ENCODE measurements at regions of chr14 and their contacts with region 1.

Region 1: DNA sequence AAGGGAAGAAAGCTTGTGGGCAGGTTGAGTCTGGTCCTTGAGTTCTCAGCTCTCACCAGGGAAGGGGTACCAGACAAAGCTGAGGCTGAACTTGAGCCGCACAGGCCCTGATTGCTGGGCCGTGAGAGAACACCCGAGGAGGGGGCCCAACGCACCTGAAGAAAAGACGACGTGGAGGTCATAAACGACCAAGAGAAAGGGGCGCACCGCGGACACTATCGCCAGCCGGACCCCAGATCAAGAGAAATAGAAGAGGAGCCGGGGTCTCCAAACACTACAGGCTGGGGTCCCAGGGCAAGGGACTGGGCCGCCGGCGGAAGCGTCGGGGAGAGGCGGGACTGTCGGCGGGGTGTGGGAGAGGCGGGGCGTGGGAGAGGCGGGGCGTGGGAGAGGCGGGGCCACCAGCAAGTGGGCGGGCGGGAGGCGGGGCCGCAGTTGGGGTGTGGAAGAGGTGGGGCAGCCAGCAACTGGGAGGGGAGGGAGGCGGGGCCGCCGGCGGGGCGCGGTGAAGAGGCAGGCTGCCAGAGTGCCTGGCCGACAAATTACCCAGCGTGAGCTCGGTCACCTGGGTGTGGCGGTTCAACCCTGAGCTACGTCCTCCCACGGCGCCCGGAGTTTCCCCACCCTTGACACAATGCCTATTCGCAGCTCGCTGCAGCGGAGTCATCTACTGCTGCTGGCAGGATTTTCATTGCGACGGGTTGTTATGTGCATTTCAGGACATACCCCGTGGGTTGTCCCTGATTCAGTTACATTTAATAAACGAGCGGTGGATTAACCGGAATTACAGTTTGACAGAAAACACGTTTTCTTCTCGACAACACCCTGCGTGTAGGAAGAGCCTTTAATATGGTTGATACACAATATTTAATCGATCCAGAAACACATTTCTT is 15.5 kb upstream of the NEMF start:
- DNase-seq: peak; percentile 95 to 98 (median 98)
- H3K4me3 ChIP-seq: peak overlapping the region; percentile 63 to 83 (median 73)
- H3K27ac ChIP-seq: peak overlapping the region; percentile 80 to 91
- H3K4me1 ChIP-seq: peaks cover 12 to 34% (median 26%) of the 10 kb centered on the region in 4 experiments
- H3K27me3 ChIP-seq: no peaks in the 10 kb centered on the region

Region 2: GRCh38 chr14:49852301-49853157 is 15.5 kb before region 1 on chr14 and contains the start of gene NEMF:
- CTCF ChIA-PET with region 1: interaction called, 96 read pairs
- POLR2A ChIA-PET with region 1: interaction called, 3 read pairs
- DNase-seq: peak; percentile 94 to 96 (median 95)
- H3K4me3 ChIP-seq: peak within 1 kb of the TSS; percentile 85 to 100 (median 98)
- H3K27ac ChIP-seq: peak within 1 kb of the TSS; percentile 91 to 97
- H3K4me1 ChIP-seq: peaks cover 9 to 19% (median 10%) of the 10 kb centered on the region in 4 experiments
- H3K27me3 ChIP-seq: no peaks in the 10 kb centered on the region

Region 3: DNA sequence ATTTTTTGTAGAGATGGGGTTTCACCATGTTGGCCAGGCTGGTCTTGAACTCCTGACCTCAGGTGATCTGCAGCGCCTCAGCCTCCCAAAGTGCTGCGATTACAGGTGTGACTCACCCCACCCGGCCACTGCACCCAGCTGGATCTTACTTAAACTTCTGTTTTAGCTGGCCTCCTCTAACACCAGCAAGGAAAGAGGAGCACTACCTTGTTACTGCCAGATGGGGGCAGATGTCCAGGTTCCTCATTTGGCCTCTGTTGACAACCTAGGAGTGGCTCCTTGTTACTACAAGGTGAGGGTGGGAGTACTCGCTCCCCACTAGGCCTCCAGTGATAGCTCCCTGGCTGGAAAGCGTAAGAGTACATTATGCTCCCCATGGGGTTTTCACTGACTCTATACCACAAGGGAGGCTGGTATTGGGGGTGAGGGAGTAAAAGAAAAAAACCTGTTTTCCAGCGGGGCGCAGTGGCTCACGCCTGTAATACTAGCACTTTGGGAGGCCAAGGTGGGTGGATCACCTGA is 11.7 kb after region 1 on chr14:
- CTCF ChIA-PET with region 1: interaction called, 12 read pairs
- POLR2A ChIA-PET with region 1: no interaction called
- DNase-seq: peak; percentile 84 to 92 (median 92)
- H3K4me3 ChIP-seq: no peak overlapping the region
- H3K27ac ChIP-seq: no peak overlapping the region
- H3K4me1 ChIP-seq: peaks cover 0 to 16% (median 5%) of the 10 kb centered on the region in 4 experiments
- H3K27me3 ChIP-seq: no peaks in the 10 kb centered on the region

Region 4: DNA sequence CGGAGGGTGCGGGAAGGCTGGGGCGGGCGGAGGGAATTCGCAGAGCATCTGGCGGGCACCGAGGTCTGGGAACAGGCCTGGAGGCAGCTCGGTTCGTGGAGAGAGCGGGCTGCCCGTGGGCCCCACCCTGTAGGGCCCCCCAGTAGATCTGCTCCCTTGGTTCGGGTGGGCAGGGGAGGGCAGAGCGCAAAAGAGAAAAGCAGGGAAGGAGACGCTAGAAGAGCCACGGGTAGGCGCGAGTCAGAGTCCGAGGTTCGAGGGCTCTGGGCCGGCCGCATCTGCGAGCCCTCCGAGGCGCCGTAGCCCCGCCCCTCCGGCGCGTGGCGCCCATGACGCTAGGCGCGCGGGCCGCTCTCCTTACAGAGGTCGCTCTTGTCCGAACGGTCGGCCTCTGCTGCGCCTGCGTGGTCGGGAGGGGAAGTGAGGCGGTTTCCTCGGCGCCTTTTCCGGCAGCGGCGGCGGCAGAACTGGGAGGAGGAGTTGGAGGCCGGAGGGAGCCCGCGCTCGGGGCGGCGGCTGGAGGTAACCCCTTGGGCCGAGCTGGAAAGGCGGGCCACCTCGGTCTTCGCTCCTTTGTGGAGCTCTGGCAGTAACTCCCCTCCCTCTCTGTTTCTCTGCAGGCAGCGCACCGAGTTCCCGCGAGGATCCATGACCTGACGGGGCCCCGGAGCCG is 24.7 kb after region 1 on chr14 and contains the start of gene ARF6:
- CTCF ChIA-PET with region 1: no interaction called
- POLR2A ChIA-PET with region 1: interaction called, 10 read pairs
- DNase-seq: peak; percentile 96 to 98 (median 98)
- H3K4me3 ChIP-seq: peak within 1 kb of the TSS; percentile 84 to 98 (median 95)
- H3K27ac ChIP-seq: peak within 1 kb of the TSS; percentile 92 to 94
- H3K4me1 ChIP-seq: peaks cover 16 to 46% (median 29%) of the 10 kb centered on the region in 4 experiments
- H3K27me3 ChIP-seq: no peaks in the 10 kb centered on the region

Region 5: DNA sequence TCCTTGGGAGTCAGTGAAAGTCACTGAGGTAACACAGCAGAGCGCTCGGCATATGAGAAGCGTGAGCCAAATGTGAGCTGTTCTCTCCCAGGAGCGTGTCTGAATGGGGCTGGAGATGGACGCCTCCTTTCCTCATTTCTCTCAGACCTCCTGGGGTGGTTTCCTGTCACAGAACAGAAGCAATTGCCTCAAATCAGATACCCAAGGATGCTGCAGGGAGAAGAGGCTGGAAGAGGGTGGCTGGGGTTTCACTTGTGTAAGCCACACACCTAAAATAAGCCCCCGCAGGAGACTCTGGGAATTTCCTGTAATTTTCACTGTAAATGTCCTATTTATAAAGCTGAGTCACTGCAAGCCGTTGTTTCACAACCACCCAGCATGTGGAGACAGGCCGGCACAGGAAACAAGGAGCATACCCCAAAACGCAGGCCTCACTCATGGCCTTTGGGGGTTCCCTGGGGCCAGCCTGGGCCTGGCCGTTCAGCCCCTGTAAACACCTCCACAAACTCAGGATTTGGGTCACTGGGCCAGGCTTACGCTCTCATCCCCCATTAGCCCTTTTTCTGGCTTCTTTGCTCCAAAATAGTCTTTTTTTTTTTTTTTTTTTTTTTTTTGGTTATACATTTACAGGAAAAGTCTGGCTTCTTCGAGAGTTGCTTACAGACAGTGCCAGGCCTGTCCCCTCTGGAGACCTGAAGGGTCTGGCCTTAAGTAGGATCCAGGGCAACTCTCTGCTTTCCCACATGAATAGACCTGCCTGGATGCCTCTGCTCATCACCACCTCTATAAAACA is 193.0 kb after region 1 on chr14:
- CTCF ChIA-PET with region 1: interaction called, 20 read pairs
- POLR2A ChIA-PET with region 1: no interaction called
- DNase-seq: peak; percentile 75 to 94 (median 92)
- H3K4me3 ChIP-seq: peak overlapping the region in 4 of 7 experiments; percentile 12 to 46 (median 22)
- H3K27ac ChIP-seq: peak overlapping the region; percentile 16 to 69
- H3K4me1 ChIP-seq: peaks cover 25 to 90% (median 71%) of the 10 kb centered on the region in 4 experiments
- H3K27me3 ChIP-seq: no peaks in the 10 kb centered on the region

Region 6: DNA sequence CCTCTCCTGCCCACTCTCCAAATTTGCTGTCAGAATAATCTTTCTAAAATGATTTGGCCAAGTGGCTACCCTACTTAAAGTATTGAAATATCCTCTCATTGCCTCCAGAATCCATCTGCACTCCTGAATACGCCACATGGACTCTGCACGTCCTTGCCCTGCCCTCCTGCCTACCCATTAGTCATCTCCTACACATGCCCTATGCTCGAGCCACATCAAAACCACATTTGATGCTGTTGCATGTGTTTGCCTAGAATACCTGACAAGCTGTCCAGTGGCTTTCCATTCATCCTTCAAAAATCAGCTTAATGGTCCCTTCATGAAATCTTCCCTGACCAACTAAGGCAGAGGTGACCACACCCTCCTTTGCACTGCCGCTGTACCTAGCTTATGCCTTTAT is 231.3 kb after region 1 on chr14:
- CTCF ChIA-PET with region 1: interaction called, 179 read pairs
- POLR2A ChIA-PET with region 1: interaction called, 4 read pairs
- DNase-seq: no peak
- H3K4me3 ChIP-seq: no peak overlapping the region
- H3K27ac ChIP-seq: no peak overlapping the region
- H3K4me1 ChIP-seq: peaks cover 2 to 11% (median 6%) of the 10 kb centered on the region in 4 experiments
- H3K27me3 ChIP-seq: no peaks in the 10 kb centered on the region

Region 7: GRCh38 chr14:50425816-50426215 is 557.7 kb after region 1 on chr14:
- CTCF ChIA-PET with region 1: no interaction called
- POLR2A ChIA-PET with region 1: no interaction called
- DNase-seq: no peak
- H3K4me3 ChIP-seq: no peak overlapping the region
- H3K27ac ChIP-seq: no peak overlapping the region
- H3K4me1 ChIP-seq: no peaks in the 10 kb centered on the region
- H3K27me3 ChIP-seq: no peaks in the 10 kb centered on the region